Heart right ventricle (tissue), 16 donors: ENCODE measurements at regions of chr10 and their contacts with region 1.

Region 1: DNA sequence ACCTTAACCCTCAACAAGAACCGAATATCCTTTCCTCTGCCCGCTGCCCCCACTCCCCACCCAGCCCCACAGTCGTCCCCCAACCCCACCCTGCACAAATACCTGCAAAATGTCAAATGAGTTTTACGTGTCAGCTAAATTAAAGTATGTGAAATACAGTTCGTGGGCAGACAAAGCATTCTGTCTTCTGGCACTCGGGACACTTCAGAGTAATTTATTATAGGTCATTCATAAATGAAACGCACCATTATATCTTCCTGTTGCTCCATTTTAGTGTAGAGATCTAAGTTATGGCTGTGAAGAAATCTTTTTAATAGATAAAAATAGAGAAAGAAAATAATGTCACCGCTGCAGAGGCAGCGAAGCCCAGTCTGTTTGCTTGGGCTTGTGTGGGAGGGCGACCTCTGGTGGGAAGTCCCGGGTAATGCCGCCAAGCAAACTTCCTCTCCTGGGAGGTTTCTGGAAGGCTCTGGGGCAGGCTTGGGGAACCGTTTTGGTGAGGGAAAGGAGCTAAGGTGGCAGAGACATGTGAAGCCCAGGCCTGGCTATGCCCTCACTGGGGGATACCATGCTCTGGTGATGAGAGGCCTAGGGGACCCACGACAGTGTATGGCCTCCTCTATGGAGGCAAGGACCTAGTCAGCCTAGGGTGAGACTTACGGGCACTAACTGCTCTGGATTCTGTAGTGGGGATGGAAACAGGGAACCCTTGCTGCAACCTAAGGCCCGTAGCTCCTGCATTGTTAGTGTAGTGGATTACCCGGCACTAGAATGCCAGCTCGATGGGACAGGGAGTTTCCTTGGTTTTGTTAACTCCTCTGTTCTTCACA is 604.9 kb downstream of the LRMDA start:
- DNase-seq: peak; percentile 73 to 81
- ATAC-seq: peak; percentile 78 to 95 (median 88)
- H3K4me3 ChIP-seq: peak overlapping the region in 6 of 10 donors; percentile 19 to 38 (median 25)
- H3K27ac ChIP-seq: no peak overlapping the region
- H3K4me1 ChIP-seq: peaks cover 0 to 25% (median 9%) of the 10 kb centered on the region in 9 donors
- H3K27me3 ChIP-seq: no peaks in the 10 kb centered on the region
- CTCF ChIP-seq: peak; percentile 88 to 98 (median 95)

Region 2: GRCh38 chr10:74863551-74863950 is 1172.8 kb before region 1 on chr10:
- intact Hi-C with region 1: loop called in 1 of 10 experiments (anchors 10 kb)
- DNase-seq: no peak
- ATAC-seq: no peak
- H3K4me3 ChIP-seq: no peak overlapping the region
- H3K27ac ChIP-seq: no peak overlapping the region
- H3K4me1 ChIP-seq: peaks cover 0 to 59% (median 27%) of the 10 kb centered on the region in 9 donors
- H3K27me3 ChIP-seq: no peaks in the 10 kb centered on the region
- CTCF ChIP-seq: no peak

Region 3: DNA sequence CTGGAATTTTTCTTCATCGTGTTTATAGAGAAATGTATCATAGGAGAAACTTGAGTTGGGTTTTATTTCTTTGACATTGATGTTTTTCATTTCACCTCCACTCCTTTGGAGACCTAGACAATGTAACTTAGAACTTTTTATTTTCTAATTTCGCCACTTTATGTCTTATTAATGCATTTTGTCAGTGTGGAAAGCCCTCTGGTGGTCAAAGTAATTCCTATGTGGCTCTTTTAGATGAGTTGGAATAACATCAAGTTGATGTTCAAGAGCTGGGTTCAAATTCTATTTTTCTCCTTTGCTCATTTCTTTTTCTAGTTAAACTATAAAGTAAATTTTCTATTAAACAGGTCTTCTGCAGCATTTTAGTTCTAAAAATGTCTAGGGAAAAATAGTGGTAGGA is 126.3 kb before region 1 on chr10:
- intact Hi-C with region 1: loop called in 1 of 10 experiments (anchors 5 kb)
- DNase-seq: no peak
- ATAC-seq: no peak
- H3K4me3 ChIP-seq: no peak overlapping the region
- H3K27ac ChIP-seq: no peak overlapping the region
- H3K4me1 ChIP-seq: peaks cover 0 to under 1% (median 0%) of the 10 kb centered on the region in 9 donors
- H3K27me3 ChIP-seq: no peaks in the 10 kb centered on the region
- CTCF ChIP-seq: peak; percentile 21 to 64 (median 59)

Region 4: DNA sequence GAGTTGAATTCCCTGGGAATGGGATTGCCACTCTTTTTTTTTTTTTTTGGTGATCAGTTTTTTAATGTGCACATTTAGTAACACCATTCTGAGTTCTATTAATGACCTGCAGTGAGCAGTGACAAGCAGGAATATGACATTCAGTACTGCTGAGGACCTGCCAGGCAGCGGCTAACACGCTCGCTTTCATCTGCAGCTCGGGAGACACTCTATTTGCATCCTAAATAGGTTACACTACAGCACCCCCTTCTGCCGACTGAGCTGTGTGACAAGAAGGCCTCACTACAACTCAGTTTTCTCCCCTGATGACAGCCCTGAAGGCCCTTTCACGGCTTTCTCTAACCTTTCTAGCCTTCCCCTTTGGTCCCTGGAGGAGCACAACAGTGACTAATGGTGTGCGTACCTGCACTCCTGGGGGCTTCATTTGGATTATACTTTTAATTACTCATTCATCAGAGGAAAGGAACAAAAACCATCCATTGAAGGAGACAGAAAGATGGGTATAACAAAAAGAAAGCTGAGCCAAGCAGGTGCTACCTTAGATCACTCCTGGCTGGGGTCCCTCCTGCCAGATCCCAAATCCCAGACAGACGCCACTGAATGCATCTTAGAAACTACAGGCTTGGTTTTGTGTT is 267.5 kb after region 1 on chr10:
- intact Hi-C with region 1: loop called in 4 of 10 experiments (anchors 5 to 10 kb)
- DNase-seq: peak; percentile 59 to 78
- ATAC-seq: peak; percentile 90 to 97 (median 94)
- H3K4me3 ChIP-seq: no peak overlapping the region
- H3K27ac ChIP-seq: no peak overlapping the region
- H3K4me1 ChIP-seq: peaks cover 0 to 34% (median 15%) of the 10 kb centered on the region in 9 donors
- H3K27me3 ChIP-seq: no peaks in the 10 kb centered on the region
- CTCF ChIP-seq: peak; percentile 20 to 72 (median 58)

Region 5: GRCh38 chr10:76984559-76985443 is 948.5 kb after region 1 on chr10:
- intact Hi-C with region 1: loop called in 2 of 10 experiments (anchors 5 to 10 kb)
- DNase-seq: peak; percentile 47 to 58
- ATAC-seq: peak in 6 of 8 donors; percentile 57 to 87 (median 72)
- H3K4me3 ChIP-seq: no peak overlapping the region
- H3K27ac ChIP-seq: no peak overlapping the region
- H3K4me1 ChIP-seq: no peaks in the 10 kb centered on the region
- H3K27me3 ChIP-seq: peaks cover 0 to 8% (median 0%) of the 10 kb centered on the region in 7 donors
- CTCF ChIP-seq: peak; percentile 65 to 97 (median 95)

Region 6: DNA sequence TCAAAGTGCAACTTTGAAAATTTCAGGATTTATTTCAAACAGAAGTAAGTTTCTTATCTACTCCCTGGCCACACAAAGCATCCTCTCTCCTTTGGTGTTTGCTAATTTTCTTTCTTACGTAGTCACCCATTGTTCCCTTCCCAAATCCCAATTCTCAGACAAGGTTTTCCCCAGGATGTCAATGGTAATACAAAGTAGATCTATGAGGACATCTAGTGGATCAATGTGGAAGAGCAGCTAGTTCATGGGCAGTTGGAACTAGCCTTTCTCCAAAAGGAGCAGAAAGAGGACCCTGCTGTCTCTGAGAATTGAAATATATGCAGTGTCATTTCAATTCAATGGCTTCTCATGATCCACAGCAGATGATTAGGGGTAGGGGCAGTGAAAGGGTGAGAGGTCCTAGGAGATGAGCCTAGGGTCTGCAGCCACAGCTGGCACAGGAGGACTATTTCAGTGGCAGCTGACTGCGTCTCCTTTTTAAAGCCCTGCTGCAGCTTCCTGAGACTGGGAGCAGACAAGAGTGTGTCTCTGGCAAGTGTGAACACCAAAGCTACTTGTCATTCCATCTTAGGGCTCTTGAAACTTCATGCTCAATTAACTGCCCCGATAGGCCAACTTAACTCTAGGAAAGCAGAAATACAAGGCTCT is 968.7 kb after region 1 on chr10:
- intact Hi-C with region 1: loop called in 1 of 10 experiments (anchors 10 kb)
- DNase-seq: peak in 1 of 2 donors; percentile 54
- ATAC-seq: peak; percentile 68 to 83 (median 77)
- H3K4me3 ChIP-seq: no peak overlapping the region
- H3K27ac ChIP-seq: no peak overlapping the region
- H3K4me1 ChIP-seq: peaks cover 0 to 5% (median 0%) of the 10 kb centered on the region in 9 donors
- H3K27me3 ChIP-seq: peaks cover 0 to 5% (median 0%) of the 10 kb centered on the region in 7 donors
- CTCF ChIP-seq: peak; percentile 58 to 87 (median 79)